SK-N-SH (cell line): ENCODE measurements at regions of chr9 and their contacts with region 1.

Region 1: GRCh38 chr9:76704593-76705204 is 59.5 kb upstream of the PCA3 start:
- DNase-seq: peak; percentile 39
- H3K4me3 ChIP-seq: peak overlapping the region in 1 of 2 experiments; percentile 42; a peak in 1 of 4 replicates
- H3K27ac ChIP-seq: no peak overlapping the region
- H3K4me1 ChIP-seq: peaks cover 0 to 16% of the 10 kb centered on the region in 2 experiments; a peak in 2 of 4 replicates
- H3K27me3 ChIP-seq: peaks cover 39% of the 10 kb centered on the region
- CTCF ChIP-seq: peak; percentile 78
- EP300 ChIP-seq: no peak
- RAD21 ChIP-seq: peak; percentile 86

Region 2: DNA sequence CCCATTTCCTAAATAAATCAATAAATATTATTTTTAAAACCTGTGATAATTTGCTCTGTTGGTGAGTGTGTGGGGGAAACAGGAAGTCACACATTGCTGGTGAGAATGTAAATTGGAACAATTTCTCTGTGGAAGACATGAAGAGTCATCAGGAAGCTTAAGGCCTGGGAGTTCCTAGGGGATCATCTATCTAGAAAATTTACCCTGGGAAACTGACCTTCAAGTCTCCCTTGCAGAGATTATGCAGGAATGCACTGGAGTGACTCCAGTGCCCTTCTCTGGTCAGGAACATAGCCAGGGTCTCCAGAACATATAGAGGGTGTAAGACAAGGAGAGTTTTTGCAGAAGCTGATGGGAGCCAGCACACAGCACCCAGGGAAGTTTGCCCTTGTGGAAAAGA is 258.7 kb before region 1 on chr9:
- CTCF ChIA-PET with region 1: interaction called, 30 read pairs
- POLR2A ChIA-PET with region 1: no interaction called
- DNase-seq: no peak
- H3K4me3 ChIP-seq: no peak overlapping the region
- H3K27ac ChIP-seq: no peak overlapping the region
- H3K4me1 ChIP-seq: peaks cover 0 to 6% of the 10 kb centered on the region in 2 experiments; a peak in 1 of 4 replicates
- H3K27me3 ChIP-seq: no peaks in the 10 kb centered on the region
- CTCF ChIP-seq: no peak
- EP300 ChIP-seq: no peak
- RAD21 ChIP-seq: no peak

Region 3: DNA sequence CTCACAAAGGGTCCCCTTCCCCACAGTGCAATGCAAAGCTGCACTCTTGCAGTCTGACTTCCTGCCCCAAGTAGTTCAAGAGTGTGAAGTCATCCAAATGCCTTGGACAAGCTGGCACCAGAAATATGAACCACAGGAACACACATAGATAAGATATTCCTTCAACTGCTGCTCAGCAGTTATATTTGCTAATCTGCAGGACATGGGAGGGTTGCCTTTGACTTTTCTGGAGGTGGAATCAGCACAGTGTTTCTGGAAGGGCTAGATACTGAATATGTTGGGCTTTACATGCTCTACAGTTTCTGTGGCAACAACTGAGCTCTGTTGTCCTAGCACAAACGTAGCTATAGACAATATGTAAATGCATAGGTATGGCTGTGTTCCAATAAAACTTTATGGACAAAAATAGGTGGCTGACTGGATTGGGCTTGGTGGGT is 37.2 kb before region 1 on chr9:
- CTCF ChIA-PET with region 1: interaction called, 14 read pairs
- POLR2A ChIA-PET with region 1: no interaction called
- DNase-seq: no peak
- H3K4me3 ChIP-seq: no peak overlapping the region
- H3K27ac ChIP-seq: peak overlapping the region in 1 of 2 experiments; percentile 83; a peak in 2 of 4 replicates
- H3K4me1 ChIP-seq: peaks cover 0 to 18% of the 10 kb centered on the region in 2 experiments; a peak in 2 of 4 replicates
- H3K27me3 ChIP-seq: no peaks in the 10 kb centered on the region
- CTCF ChIP-seq: no peak
- EP300 ChIP-seq: peak in 1 of 2 experiments; percentile 75; a peak in 1 of 4 replicates
- RAD21 ChIP-seq: no peak

Region 4: DNA sequence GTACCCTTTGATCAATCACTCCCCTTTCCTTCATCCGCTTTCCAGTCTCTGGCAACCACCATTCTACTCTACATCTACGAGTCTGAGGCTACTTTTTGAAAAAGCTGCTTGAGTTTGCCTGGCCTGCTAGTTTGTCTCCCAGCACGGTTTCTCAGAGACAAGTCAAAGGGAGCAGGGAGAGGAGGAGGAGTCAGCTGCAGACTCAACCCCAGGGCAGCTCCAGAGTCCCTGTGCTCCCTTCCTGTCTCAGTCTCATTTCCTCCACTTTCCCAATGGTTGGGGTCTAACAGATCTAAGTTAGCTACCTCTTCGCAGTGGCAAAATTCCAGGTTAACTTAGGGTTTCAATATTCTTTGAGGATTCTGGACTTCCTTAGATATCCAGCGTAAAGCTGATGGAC is 20.5 kb before region 1 on chr9:
- CTCF ChIA-PET with region 1: interaction called, 13 read pairs
- POLR2A ChIA-PET with region 1: no interaction called
- DNase-seq: no peak
- H3K4me3 ChIP-seq: no peak overlapping the region
- H3K27ac ChIP-seq: no peak overlapping the region
- H3K4me1 ChIP-seq: peaks cover 0 to 10% of the 10 kb centered on the region in 2 experiments; a peak in 2 of 4 replicates
- H3K27me3 ChIP-seq: no peaks in the 10 kb centered on the region
- CTCF ChIP-seq: no peak
- EP300 ChIP-seq: no peak
- RAD21 ChIP-seq: no peak

Region 5: DNA sequence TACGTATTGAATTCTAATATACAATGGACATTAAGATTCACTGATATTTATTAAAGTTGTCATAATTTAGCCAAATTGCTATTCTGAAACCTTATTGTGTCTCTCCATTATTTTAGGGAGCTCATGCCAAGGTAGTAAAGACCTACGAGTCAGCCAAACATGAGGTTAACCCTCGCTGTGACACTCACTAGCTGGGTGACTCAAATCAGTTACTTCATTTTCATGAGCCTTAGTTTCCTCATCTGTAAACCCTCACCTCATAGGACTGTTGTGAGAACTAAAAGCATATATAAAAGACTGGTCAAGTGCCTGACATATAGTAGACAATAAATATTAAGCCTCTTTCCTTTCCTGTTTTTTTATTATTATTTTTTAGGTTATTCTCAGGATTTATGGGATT is 15.5 kb after region 1 on chr9:
- CTCF ChIA-PET with region 1: interaction called, 11 read pairs
- POLR2A ChIA-PET with region 1: no interaction called
- DNase-seq: no peak
- H3K4me3 ChIP-seq: no peak overlapping the region
- H3K27ac ChIP-seq: no peak overlapping the region
- H3K4me1 ChIP-seq: no peaks in the 10 kb centered on the region
- H3K27me3 ChIP-seq: peaks cover 28% of the 10 kb centered on the region
- CTCF ChIP-seq: no peak
- EP300 ChIP-seq: no peak
- RAD21 ChIP-seq: no peak

Region 6: GRCh38 chr9:76835571-76836283 is 131.0 kb after region 1 on chr9:
- CTCF ChIA-PET with region 1: no interaction called
- POLR2A ChIA-PET with region 1: no interaction called
- DNase-seq: no peak
- H3K4me3 ChIP-seq: peak overlapping the region in 1 of 2 experiments; percentile 22; a peak in 2 of 4 replicates
- H3K27ac ChIP-seq: peak overlapping the region; percentile 2 to 49; a peak in 3 of 4 replicates
- H3K4me1 ChIP-seq: peaks cover 0 to 4% of the 10 kb centered on the region in 2 experiments; a peak in 1 of 4 replicates
- H3K27me3 ChIP-seq: peaks cover 5% of the 10 kb centered on the region; the same call in 1 of the 2 replicates
- CTCF ChIP-seq: no peak
- EP300 ChIP-seq: peak in 1 of 2 experiments; percentile 10; a peak in 1 of 4 replicates
- RAD21 ChIP-seq: no peak